ENCODE measurements at regions of chr1 and their contacts with region 1.

Region 1: GRCh38 chr1:24070821-24071393 is 41.0 kb downstream of the MYOM3 start:
- DNase-seq: peak; percentile 72
- ATAC-seq: peak; percentile 67

Region 2: DNA sequence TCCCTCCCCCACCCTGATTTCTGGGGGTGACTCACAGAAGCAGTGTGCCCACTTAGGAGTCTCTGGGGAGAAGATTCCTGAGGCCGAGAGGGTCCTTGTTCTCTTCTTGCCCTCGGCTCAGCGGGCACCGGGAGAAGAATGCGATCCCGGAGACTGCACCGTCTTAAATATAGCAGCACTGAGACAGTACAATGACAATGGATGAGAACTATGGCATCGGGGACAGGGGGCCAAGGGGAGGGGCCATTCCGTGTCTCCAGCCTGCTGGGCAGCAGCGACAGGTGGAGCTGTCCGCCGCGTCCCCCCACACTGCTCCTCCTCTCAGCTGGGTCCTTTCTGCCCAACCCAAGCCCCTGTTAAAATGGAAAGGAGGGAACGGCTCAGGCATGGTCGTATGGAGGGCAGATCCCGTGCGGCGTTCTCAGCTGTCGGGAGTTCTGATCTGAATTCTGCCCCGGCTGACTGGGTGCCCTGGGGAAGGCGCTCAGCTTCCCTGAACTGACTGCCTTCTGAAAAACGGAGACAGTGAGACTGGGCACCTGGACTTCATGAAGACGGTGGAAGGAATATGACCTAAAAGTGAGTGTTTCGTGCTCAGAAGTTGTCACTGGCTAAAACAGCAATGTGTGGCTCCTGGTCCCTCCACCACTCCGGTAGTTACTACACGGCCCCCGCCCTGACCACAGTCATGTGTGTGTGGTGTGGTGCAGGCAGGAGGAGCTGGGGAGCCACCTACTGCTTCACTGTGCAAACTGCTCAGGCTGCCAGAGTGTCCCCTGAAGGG is 41.3 kb after region 1 on chr1 and contains the start of gene MYOM3:
- intact Hi-C with region 1: loop called (anchors 1 kb)
- DNase-seq: no peak
- ATAC-seq: peak; percentile 74
- total RNA-seq, gene MYOM3: 403 TPM